Caco-2 (cell line): ENCODE measurements at regions of chr19 and their contacts with region 1.

Region 1: GRCh38 chr19:40690693-40691420 is 406 bp upstream of the NUMBL start:
- DNase-seq: peak; percentile 94 to 95
- H3K4me3 ChIP-seq: peak overlapping the region; percentile 58
- H3K4me3 Mint-ChIP-seq: no peak overlapping the region
- H3K27ac Mint-ChIP-seq: peak overlapping the region; percentile 100
- H3K4me1 ChIP-seq: peaks cover 24% of the 10 kb centered on the region
- H3K4me1 Mint-ChIP-seq: peaks cover 5% of the 10 kb centered on the region
- H3K27me3 ChIP-seq: no peaks in the 10 kb centered on the region
- H3K27me3 Mint-ChIP-seq: no peaks in the 10 kb centered on the region
- CTCF ChIP-seq: no peak

Region 2: DNA sequence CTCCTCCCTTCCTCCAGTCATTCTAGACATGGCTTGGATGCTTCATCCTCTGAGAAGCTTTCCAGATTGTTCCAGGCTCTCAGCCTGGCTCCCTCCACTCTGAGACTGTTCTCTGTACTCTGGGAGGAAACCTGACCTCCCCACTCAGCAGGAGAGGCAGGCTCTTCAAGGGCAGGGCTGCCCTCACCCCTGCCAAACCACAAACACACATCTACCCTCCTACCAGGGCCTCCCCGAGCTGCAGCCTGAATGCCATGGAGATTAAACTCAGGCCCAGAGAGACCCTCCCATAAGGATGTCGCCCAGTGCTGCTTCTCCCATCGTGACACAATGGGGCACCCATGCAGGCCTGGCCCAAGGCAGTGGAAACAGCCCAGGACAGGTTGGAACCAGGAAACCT is 16.6 kb before region 1 on chr19:
- CTCF ChIA-PET with region 1: no interaction called
- POLR2A ChIA-PET with region 1: no interaction called
- intact Hi-C with region 1: no loop called
- DNase-seq: no peak
- H3K4me3 ChIP-seq: no peak overlapping the region
- H3K4me3 Mint-ChIP-seq: no peak overlapping the region
- H3K27ac Mint-ChIP-seq: no peak overlapping the region
- H3K4me1 ChIP-seq: no peaks in the 10 kb centered on the region
- H3K4me1 Mint-ChIP-seq: no peaks in the 10 kb centered on the region
- H3K27me3 ChIP-seq: no peaks in the 10 kb centered on the region
- H3K27me3 Mint-ChIP-seq: no peaks in the 10 kb centered on the region
- CTCF ChIP-seq: no peak

Region 3: GRCh38 chr19:40716655-40717324 is 25.9 kb after region 1 on chr19 and contains the starts of genes COQ8B and ITPKC:
- CTCF ChIA-PET with region 1: no interaction called
- POLR2A ChIA-PET with region 1: interaction called, 13 read pairs
- intact Hi-C with region 1: loop called (anchors 1 kb)
- DNase-seq: peak; percentile 100
- H3K4me3 ChIP-seq: peak within 1 kb of the TSS; percentile 71
- H3K4me3 Mint-ChIP-seq: peak within 1 kb of the TSS; percentile 84
- H3K27ac Mint-ChIP-seq: peak within 1 kb of the TSS; percentile 93
- H3K4me1 ChIP-seq: peaks cover 6% of the 10 kb centered on the region; the same call in 1 of the 2 replicates
- H3K4me1 Mint-ChIP-seq: peaks cover 18% of the 10 kb centered on the region
- H3K27me3 ChIP-seq: no peaks in the 10 kb centered on the region
- H3K27me3 Mint-ChIP-seq: no peaks in the 10 kb centered on the region
- CTCF ChIP-seq: no peak
- total RNA-seq, gene COQ8B: 30.9 and 35.7 TPM in 2 replicates
- total RNA-seq, gene ITPKC: 28.5 and 31.2 TPM in 2 replicates

Region 4: GRCh38 chr19:40721936-40722661 is 31.2 kb after region 1 on chr19:
- CTCF ChIA-PET with region 1: no interaction called
- POLR2A ChIA-PET with region 1: interaction called, 13 read pairs
- intact Hi-C with region 1: no loop called
- DNase-seq: no peak
- H3K4me3 ChIP-seq: no peak overlapping the region
- H3K4me3 Mint-ChIP-seq: no peak overlapping the region
- H3K27ac Mint-ChIP-seq: peak overlapping the region; percentile 6
- H3K4me1 ChIP-seq: peaks cover 6% of the 10 kb centered on the region; the same call in 1 of the 2 replicates
- H3K4me1 Mint-ChIP-seq: peaks cover 10% of the 10 kb centered on the region
- H3K27me3 ChIP-seq: no peaks in the 10 kb centered on the region
- H3K27me3 Mint-ChIP-seq: no peaks in the 10 kb centered on the region
- CTCF ChIP-seq: no peak

Region 5: DNA sequence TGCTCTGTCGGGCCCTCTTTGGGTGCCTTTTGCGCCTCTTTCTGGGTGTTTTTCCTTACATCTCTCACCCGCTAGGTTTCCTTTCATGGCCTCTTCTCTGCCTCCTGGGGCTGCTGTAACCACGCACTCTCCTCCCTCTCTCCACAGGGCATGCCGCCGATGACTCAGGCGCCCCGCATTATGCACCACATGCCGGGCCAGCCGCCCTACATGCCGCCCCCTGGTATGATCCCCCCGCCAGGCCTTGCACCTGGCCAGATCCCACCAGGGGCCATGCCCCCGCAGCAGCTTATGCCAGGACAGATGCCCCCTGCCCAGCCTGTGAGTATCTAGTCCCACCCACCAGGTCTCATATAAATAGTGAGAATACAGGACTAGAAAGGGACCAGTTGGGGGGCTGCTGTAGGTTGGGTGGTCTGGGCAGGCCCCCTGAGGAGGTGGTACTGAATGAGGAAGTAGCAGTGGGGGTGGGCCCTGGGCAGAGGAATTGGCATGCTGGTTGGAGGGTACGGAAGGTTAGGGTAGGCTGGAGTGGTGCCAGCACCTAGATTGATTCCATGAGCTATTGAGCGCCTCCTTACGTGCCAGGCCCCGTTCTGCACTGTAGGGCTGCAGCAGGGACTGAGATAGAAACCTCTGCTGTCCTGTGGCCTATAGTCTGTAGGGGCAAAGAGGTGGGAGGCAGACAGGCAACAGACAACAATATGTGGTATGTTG is 72.1 kb after region 1 on chr19:
- CTCF ChIA-PET with region 1: no interaction called
- POLR2A ChIA-PET with region 1: no interaction called
- intact Hi-C with region 1: no loop called
- DNase-seq: no peak
- H3K4me3 ChIP-seq: no peak overlapping the region
- H3K4me3 Mint-ChIP-seq: no peak overlapping the region
- H3K27ac Mint-ChIP-seq: no peak overlapping the region
- H3K4me1 ChIP-seq: no peaks in the 10 kb centered on the region
- H3K4me1 Mint-ChIP-seq: peaks cover 6% of the 10 kb centered on the region
- H3K27me3 ChIP-seq: no peaks in the 10 kb centered on the region
- H3K27me3 Mint-ChIP-seq: no peaks in the 10 kb centered on the region
- CTCF ChIP-seq: no peak

Region 6: GRCh38 chr19:41192574-41193429 is 501.9 kb after region 1 on chr19 and contains the start of gene CYP2S1:
- CTCF ChIA-PET with region 1: no interaction called
- POLR2A ChIA-PET with region 1: no interaction called
- intact Hi-C with region 1: no loop called
- DNase-seq: peak; percentile 85 to 90
- H3K4me3 ChIP-seq: peak within 1 kb of the TSS; percentile 85
- H3K4me3 Mint-ChIP-seq: peak within 1 kb of the TSS; percentile 76
- H3K27ac Mint-ChIP-seq: peak within 1 kb of the TSS; percentile 43
- H3K4me1 ChIP-seq: peaks cover 23% of the 10 kb centered on the region
- H3K4me1 Mint-ChIP-seq: peaks cover 25% of the 10 kb centered on the region
- H3K27me3 ChIP-seq: no peaks in the 10 kb centered on the region
- H3K27me3 Mint-ChIP-seq: no peaks in the 10 kb centered on the region
- CTCF ChIP-seq: no peak
- total RNA-seq, gene CYP2S1: 56.0 and 63.0 TPM in 2 replicates